AG04450 (cell line): ENCODE measurements at regions of chr3 and their contacts with region 1.

Region 1: DNA sequence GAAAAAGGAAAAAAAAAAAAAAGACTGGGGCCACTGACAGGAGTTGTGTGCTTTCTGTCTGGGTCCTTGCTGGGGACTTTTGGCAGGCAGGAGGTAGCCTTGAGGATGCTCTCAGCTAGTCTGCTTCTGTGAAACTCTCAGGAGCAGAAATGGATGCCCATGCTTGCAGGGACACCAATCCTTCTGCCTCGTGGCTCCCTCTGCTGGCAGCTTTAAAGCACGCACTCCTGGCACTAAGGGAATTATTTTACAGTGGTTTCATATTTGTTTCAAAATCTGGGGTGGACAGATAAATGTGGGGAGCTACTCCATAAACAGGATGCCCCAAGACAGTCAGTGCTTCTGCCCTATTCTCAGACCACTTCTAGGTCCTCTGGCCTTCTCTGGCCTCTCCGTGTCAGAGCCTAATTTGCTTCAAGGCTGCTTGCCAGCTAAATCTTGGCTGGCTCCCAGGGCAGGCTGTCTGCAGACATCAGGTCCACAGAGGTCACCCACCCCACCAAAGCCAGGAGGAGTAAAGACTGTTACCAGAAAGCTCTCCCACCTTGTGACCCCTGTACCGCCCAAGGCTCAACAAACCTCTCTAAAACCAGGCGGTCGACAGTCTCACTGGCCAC is 17.1 kb downstream of the TRAIP start:
- DNase-seq: peak; percentile 50
- H3K4me3 ChIP-seq: no peak overlapping the region
- H3K27ac ChIP-seq: no peak overlapping the region
- H3K27me3 ChIP-seq: no peaks in the 10 kb centered on the region
- CTCF ChIP-seq: peak; percentile 90

Region 2: DNA sequence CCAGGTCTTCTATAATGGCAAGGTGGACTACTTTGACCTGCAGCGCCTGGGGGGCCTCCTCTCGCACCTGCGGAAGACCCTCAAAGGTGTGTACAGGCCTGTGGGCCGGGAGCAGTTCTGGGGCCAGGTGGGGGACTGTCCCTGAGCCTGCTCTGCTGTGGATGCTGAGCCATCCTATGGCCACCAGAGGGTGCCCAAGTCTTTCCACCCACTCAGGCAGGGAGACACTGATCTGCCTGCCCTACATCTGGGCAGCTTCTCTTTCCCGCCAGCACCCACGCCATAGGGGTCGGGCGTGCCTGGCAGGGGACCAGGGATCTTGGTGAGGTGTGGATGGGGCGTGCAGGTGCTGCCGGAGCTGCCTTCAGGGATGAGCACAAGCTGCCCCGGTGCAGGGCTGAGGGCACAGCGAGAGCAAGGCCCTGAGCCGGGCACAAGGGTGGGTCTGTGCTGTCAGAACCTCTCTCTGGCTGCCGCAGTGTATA is 135.8 kb before region 1 on chr3:
- CTCF ChIA-PET with region 1: interaction called, 20 read pairs
- POLR2A ChIA-PET with region 1: no interaction called
- DNase-seq: peak; percentile 27
- H3K4me3 ChIP-seq: no peak overlapping the region
- H3K27ac ChIP-seq: no peak overlapping the region
- H3K27me3 ChIP-seq: no peaks in the 10 kb centered on the region
- CTCF ChIP-seq: peak; percentile 85

Region 3: GRCh38 chr3:49802719-49803464 is 36.4 kb before region 1 on chr3 and contains the start of gene INKA1:
- CTCF ChIA-PET with region 1: interaction called, 182 read pairs
- POLR2A ChIA-PET with region 1: interaction called, 8 read pairs
- DNase-seq: no peak
- H3K4me3 ChIP-seq: peak within 1 kb of the TSS; percentile 90
- H3K27ac ChIP-seq: peak within 1 kb of the TSS; percentile 77
- H3K27me3 ChIP-seq: no peaks in the 10 kb centered on the region
- CTCF ChIP-seq: peak; percentile 85
- polyA plus RNA-seq, gene INKA1: 1.9 and 2.8 TPM in 2 replicates

Region 4: GRCh38 chr3:49826016-49826415 is 13.3 kb before region 1 on chr3:
- CTCF ChIA-PET with region 1: interaction called, 43 read pairs
- POLR2A ChIA-PET with region 1: interaction called, 3 read pairs
- DNase-seq: no peak
- H3K4me3 ChIP-seq: no peak overlapping the region
- H3K27ac ChIP-seq: no peak overlapping the region
- H3K27me3 ChIP-seq: no peaks in the 10 kb centered on the region
- CTCF ChIP-seq: no peak

Region 5: DNA sequence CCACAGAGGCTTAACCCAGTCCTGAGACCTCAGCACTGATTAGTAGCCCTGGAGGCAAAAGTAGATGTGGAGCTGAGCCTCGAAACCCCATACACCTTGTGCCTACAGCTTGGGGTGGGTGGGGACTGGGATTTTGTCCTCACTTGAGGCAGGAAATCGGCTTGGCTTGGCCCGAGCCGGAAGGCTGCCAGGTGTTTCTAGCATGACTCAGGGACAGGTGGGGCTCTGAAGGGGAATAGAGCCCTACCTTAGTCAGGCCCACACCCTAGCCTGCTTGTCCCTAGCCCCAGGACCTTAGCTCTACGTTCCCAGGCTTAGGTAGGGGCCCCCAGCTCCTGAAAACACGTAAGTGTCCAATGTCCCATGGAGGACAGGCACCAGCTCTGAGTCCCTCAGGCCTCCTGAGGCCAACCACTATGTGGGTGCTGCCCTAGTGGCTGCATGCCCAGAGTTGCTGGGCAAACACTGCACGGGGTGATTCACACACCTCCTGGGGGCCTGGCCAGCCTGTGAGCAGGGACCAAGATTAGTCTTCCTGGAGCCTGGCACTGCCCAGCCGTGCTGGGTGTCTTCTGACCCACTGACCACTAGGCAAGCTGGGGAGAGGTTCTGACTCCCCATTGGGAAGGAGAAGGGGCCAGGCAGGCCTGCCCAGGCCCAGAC is 61.3 kb after region 1 on chr3:
- CTCF ChIA-PET with region 1: interaction called, 11 read pairs
- POLR2A ChIA-PET with region 1: no interaction called
- DNase-seq: no peak
- H3K4me3 ChIP-seq: no peak overlapping the region
- H3K27ac ChIP-seq: no peak overlapping the region
- H3K27me3 ChIP-seq: no peaks in the 10 kb centered on the region
- CTCF ChIP-seq: no peak